IMR-90 (cell line): ENCODE measurements at regions of chr1 and their contacts with region 1.

Region 1: GRCh38 chr1:211133836-211134669 is at the start of gene KCNH1:
- DNase-seq: peak; percentile 69
- ATAC-seq: peak; percentile 96
- H3K4me3 ChIP-seq: peak within 1 kb of the TSS; percentile 58
- H3K27ac ChIP-seq: no peak within 1 kb of the TSS
- H3K4me1 ChIP-seq: no peaks in the 10 kb centered on the region
- H3K27me3 ChIP-seq: peaks cover 8% of the 10 kb centered on the region
- CTCF ChIP-seq: peak; percentile 99
- POLR2A ChIP-seq: peak; percentile 45
- RAD21 ChIP-seq: peak; percentile 96
- total RNA-seq, gene KCNH1: 0.54 and 0.56 TPM in 2 replicates

Region 2: GRCh38 chr1:210143465-210144062 is 990.5 kb before region 1 on chr1:
- CTCF ChIA-PET with region 1: no interaction called
- POLR2A ChIA-PET with region 1: no interaction called
- dilution Hi-C with region 1: no loop called
- in situ Hi-C with region 1: no loop called
- intact Hi-C with region 1: loop called (anchors 5 kb)
- DNase-seq: peak; percentile 68
- ATAC-seq: no peak
- H3K4me3 ChIP-seq: no peak overlapping the region
- H3K27ac ChIP-seq: no peak overlapping the region
- H3K4me1 ChIP-seq: no peaks in the 10 kb centered on the region
- H3K27me3 ChIP-seq: no peaks in the 10 kb centered on the region
- CTCF ChIP-seq: peak; percentile 74
- POLR2A ChIP-seq: no peak
- RAD21 ChIP-seq: peak; percentile 81

Region 3: DNA sequence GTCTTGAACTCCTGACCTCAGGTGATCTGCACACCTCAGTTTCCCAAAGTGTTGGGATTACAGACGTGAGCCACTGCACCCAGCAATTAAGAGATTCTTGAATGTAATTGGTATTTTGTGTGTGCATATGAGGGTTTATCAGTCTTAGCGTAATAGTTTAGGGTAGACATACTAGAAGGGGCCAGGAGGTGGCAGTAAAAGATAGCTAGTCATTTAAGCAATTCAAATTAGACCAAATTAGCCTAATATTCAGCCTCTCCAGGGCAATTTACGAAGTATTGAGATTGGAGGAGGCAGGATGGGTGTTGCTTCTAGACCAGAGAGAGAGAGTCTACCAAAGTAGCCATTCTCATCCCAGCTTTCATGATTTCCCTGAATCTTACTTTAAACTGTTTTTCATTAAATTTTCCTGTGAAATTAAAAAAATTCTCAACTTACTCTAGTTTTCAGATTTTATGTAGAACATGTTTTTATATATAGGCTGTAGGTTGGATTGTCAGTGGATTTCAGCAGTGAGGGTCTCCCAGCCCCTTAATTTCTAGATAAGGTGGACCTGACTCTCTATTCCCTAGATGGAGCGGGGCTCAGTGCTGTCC is 685.7 kb before region 1 on chr1:
- CTCF ChIA-PET with region 1: interaction called, 32 read pairs
- POLR2A ChIA-PET with region 1: no interaction called
- dilution Hi-C with region 1: no loop called
- in situ Hi-C with region 1: loop called (anchors 5 kb)
- intact Hi-C with region 1: loop called (anchors 1 kb)
- DNase-seq: peak; percentile 69
- ATAC-seq: peak; percentile 93
- H3K4me3 ChIP-seq: no peak overlapping the region
- H3K27ac ChIP-seq: no peak overlapping the region
- H3K4me1 ChIP-seq: no peaks in the 10 kb centered on the region
- H3K27me3 ChIP-seq: no peaks in the 10 kb centered on the region
- CTCF ChIP-seq: peak; percentile 85
- POLR2A ChIP-seq: no peak
- RAD21 ChIP-seq: peak; percentile 87

Region 4: DNA sequence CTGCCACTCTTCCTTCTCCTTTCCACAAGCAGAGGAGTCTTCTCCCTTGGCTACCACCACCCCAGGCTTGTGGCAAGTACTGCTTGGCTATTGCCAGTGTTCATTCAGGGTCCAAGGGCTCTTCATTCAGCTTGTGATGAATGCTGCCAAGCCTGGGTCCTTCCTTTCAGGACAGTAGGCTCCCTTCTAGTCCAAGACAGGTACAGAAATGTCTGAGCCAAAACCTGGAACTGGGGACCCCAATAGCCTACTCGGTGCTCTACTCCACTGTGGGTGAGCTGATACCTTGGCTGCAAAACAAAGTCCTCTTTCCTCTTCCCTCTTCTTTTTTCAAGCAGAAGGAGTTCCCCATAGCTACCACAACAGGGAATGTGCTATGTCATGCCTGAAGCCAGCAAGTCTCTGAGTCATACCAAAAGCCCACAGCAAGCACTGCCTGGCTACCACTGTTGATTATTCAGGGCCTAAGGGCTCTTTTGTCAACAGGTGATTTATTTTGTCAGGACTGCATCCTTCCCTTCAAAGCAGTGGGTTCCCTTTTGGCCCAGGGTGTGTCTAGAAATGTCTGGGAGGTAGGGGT is 536.4 kb before region 1 on chr1:
- CTCF ChIA-PET with region 1: interaction called, 11 read pairs
- POLR2A ChIA-PET with region 1: no interaction called
- dilution Hi-C with region 1: no loop called
- in situ Hi-C with region 1: no loop called
- intact Hi-C with region 1: no loop called
- DNase-seq: peak; percentile 96
- ATAC-seq: peak; percentile 92
- H3K4me3 ChIP-seq: no peak overlapping the region
- H3K27ac ChIP-seq: peak overlapping the region; percentile 99
- H3K4me1 ChIP-seq: peaks cover 10% of the 10 kb centered on the region
- H3K27me3 ChIP-seq: no peaks in the 10 kb centered on the region
- CTCF ChIP-seq: 0 out of 2 replicates have a peak, but pooled peaks have one; percentile 2
- POLR2A ChIP-seq: no peak; the same call in 1 of the 2 replicates
- RAD21 ChIP-seq: peak; percentile 16; the same call in 1 of the 2 replicates

Region 5: GRCh38 chr1:211514030-211514754 is 380.1 kb after region 1 on chr1:
- CTCF ChIA-PET with region 1: no interaction called
- POLR2A ChIA-PET with region 1: no interaction called
- dilution Hi-C with region 1: no loop called
- in situ Hi-C with region 1: no loop called
- intact Hi-C with region 1: loop called (anchors 5 kb)
- DNase-seq: peak; percentile 84
- ATAC-seq: peak; percentile 94
- H3K4me3 ChIP-seq: no peak overlapping the region
- H3K27ac ChIP-seq: no peak overlapping the region
- H3K4me1 ChIP-seq: peaks cover 5% of the 10 kb centered on the region; the same call in 1 of the 2 replicates
- H3K27me3 ChIP-seq: no peaks in the 10 kb centered on the region
- CTCF ChIP-seq: peak; percentile 89
- POLR2A ChIP-seq: no peak
- RAD21 ChIP-seq: peak; percentile 89